ENCODE measurements at regions of chrX and their contacts with region 1.

Region 1: GRCh38 chrX:48897621-48898306 is at the starts of genes PQBP1 and TIMM17B:
- DNase-seq: peak; percentile 95
- H3K4me3 ChIP-seq: peak within 1 kb of the TSS; percentile 47 to 81 (median 54)
- H3K27ac ChIP-seq: peak within 1 kb of the TSS; percentile 92 to 98 (median 96)
- H3K4me1 ChIP-seq: peaks cover 2 to 40% (median 22%) of the 10 kb centered on the region in 6 donors
- H3K27me3 ChIP-seq: no peaks in the 10 kb centered on the region
- CTCF ChIP-seq: peak in 1 of 11 experiments; percentile 15
- POLR2A ChIP-seq: peak in 1 of 3 donors; percentile 37
- total RNA-seq, gene PQBP1: 53.5 to 73.6 (median 68.6) TPM
- total RNA-seq, gene TIMM17B: 29.3 to 50.0 (median 38.2) TPM

Region 2: GRCh38 chrX:48801280-48802088 is 96.3 kb before region 1 on chrX and contains the start of gene HDAC6:
- intact Hi-C with region 1: loop called (anchors 10 kb)
- DNase-seq: peak; percentile 98
- H3K4me3 ChIP-seq: peak within 1 kb of the TSS; percentile 37 to 73 (median 52)
- H3K27ac ChIP-seq: peak within 1 kb of the TSS; percentile 88 to 98 (median 92)
- H3K4me1 ChIP-seq: peaks cover 0 to 15% (median 8%) of the 10 kb centered on the region in 6 donors
- H3K27me3 ChIP-seq: no peaks in the 10 kb centered on the region
- CTCF ChIP-seq: peak in 8 of 11 experiments; percentile 18 to 47 (median 29)
- POLR2A ChIP-seq: no peak
- total RNA-seq, gene HDAC6: 63.8 to 103 (median 82.9) TPM

Region 3: DNA sequence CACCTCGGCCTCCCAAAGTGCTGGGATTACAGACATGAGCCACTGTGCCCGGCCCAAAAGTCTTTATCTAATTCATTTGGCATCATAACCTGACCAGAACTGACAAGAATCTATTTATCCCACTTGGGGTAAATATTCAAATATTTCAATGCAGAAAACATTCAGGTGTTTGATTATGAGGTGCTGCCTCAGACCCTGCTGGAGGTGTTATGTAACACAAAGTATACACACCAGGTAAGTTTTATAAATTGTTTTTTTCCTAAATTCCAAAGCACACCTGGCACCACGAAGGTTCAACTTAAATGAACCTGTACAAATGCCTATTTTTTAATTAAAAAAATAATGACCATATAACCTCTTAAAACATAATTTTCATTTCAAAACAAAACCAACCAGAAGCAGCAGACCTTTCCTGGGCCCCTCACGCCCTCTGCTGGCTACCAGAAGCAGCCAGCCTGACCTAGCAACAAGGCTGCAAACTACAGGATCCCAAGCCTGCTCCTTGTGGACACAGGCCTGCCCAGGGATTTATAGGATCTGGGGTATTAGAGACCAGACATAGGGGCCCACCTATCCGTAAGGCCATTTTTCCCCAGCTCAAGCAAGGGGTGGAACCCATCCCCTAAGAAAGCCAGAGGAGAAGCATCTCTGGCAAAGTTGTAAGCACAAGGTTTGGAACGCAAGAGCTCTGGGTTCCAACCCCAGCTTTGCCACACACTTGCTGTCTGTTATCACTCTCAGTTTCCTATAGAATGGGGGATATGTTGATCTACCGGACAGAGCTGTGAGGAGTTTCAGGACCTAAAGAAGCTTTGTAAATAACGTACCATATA is 48.0 kb after region 1 on chrX:
- intact Hi-C with region 1: loop called (anchors 10 kb)
- DNase-seq: peak; percentile 88
- H3K4me3 ChIP-seq: no peak overlapping the region
- H3K27ac ChIP-seq: peak overlapping the region in 3 of 8 donors; percentile 31 to 43 (median 43)
- H3K4me1 ChIP-seq: peaks cover 9 to 65% (median 26%) of the 10 kb centered on the region in 6 donors
- H3K27me3 ChIP-seq: no peaks in the 10 kb centered on the region
- CTCF ChIP-seq: peak; percentile 36 to 87 (median 78)
- POLR2A ChIP-seq: no peak

Region 4: GRCh38 chrX:49191033-49191871 is 293.5 kb after region 1 on chrX:
- intact Hi-C with region 1: no loop called
- DNase-seq: peak; percentile 94
- H3K4me3 ChIP-seq: peak overlapping the region; percentile 43 to 80 (median 55)
- H3K27ac ChIP-seq: peak overlapping the region; percentile 69 to 94 (median 90)
- H3K4me1 ChIP-seq: peaks cover 0 to 41% (median 14%) of the 10 kb centered on the region in 6 donors
- H3K27me3 ChIP-seq: no peaks in the 10 kb centered on the region
- CTCF ChIP-seq: peak in 3 of 11 experiments; percentile 23 to 29 (median 24)
- POLR2A ChIP-seq: peak in 1 of 3 donors; percentile 64

Measured in spleen (tissue), 13 donors.